ENCODE measurements at regions of chr17 and their contacts with region 1.

Region 1: GRCh38 chr17:79991140-79991923 is 44.3 kb downstream of the TBC1D16 start:
- DNase-seq: no peak
- H3K4me3 ChIP-seq: peak overlapping the region; percentile 42
- CTCF ChIP-seq: peak; percentile 86

Region 2: DNA sequence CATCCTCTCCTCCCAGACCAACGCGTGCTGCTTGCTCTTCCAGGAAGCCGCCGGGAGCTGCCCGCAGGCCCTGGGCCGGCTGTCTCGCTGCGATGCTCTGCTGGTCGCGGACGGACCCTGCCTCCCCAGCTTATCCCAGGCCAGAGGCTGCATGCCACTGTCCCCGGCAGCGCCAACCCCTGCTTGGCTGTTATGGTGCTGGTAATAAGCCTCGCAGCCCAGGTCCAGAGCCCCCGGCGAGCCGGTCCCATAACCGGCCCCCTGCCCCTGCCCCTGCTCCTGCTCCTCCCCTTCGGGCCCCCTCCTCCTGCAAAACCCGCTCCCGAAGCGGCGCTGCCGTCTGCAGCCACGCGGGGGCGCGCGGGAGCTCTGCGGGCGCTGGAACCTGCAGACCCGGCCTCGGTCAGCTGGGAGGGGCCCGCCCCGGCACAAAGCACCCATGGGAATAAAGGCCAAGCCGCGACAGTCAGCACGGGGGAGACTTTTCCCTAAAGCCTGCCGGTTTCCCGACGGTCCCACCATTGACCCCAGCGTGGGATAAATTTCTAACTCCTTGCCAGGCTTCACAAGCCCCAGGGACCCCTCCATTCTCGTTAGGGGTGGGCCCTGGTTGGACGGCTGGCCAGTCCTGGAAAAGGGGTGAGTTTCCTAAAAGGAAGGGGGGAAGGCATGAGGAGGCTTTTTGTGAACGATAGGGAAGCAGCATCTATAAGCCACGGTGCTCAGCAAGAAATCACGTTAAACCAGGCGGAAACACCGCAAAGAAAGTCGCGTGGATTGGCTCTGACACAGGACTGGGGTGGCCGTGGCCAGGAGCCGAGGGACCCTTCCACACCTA is 249.4 kb before region 1 on chr17:
- CTCF ChIA-PET with region 1: interaction called, 26 read pairs
- POLR2A ChIA-PET with region 1: interaction called, 3 read pairs
- DNase-seq: no peak
- H3K4me3 ChIP-seq: no peak overlapping the region
- CTCF ChIP-seq: peak; percentile 95

Region 3: GRCh38 chr17:79769596-79770520 is 221.5 kb before region 1 on chr17:
- CTCF ChIA-PET with region 1: no interaction called
- POLR2A ChIA-PET with region 1: no interaction called
- DNase-seq: no peak
- H3K4me3 ChIP-seq: no peak overlapping the region
- CTCF ChIP-seq: no peak

Region 4: DNA sequence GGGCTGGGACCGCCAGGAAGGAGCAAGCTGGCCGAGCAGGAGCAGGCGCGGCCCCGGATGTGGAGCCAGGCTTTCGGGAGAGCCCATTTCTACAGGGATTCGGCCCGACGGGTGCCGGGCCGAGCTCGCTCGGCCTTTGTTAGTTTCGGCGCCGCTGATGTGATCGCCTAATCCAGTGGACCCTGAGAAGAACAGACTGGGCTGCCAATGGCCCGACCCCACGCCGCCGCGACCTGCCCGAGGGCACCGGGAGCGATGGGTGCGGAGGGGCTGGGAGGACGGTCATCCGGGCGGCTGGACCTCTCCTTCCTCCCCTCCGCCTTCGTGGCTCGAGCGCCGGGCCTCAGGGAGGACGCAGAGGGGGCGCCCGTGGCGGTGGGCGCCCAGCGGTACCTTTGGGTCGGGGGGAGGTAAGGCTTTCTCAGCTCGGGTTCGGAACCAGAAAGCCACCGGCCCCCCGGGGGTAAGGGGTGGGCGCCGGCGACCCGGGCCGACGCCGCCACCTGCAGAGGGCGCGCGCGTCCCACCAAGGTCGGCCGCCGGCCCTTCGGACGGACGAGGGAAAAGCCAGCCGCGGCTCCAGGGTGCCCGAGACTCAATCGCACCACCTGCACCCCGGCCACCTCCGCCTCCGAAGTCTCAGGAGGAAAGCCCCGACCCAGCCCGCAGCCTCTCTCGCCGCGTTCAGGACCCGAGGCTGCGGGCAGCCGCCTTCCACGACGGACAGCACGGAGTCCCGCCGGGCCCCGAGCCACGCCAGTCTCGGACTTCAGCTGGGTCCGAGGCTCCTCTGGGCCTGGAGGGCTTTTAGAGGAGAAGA is 201.6 kb before region 1 on chr17:
- CTCF ChIA-PET with region 1: interaction called, 15 read pairs
- POLR2A ChIA-PET with region 1: no interaction called
- DNase-seq: no peak
- H3K4me3 ChIP-seq: no peak overlapping the region
- CTCF ChIP-seq: peak; percentile 64

Region 5: DNA sequence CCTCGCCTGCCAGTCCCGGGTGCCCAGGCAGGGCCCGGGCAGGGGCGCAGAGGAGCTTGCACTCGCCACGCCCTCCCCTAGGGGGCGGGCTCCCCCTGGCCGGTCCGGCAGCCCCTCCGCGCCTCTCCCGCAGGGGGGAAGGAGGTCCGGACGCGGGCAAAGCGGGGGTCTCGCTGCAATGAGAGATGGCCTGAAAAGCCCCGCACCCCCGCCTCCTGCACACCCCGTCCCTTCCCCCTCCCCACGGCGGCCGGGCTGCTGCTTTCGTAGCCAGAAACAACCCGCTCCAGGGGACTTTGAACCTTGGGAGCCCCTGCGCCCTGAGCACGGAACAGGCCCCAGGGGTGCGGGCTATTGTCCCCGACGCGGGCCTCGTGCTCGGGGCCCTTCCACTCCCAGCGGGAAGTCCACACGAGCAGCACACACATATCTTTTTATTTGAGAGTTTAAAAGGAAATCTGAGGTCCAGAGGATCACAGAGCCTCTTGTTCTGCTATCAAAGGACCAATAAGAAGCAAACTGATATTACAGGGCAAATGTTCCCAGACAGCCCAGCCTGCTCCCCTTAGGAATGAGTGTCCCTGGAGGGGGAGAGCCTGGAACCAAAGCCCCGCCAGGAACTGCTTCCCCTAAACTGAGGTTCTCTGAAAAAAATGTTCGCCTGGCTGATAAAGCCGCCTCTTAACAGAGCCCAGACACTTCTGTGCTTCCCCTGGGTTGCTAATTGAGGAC is 146.3 kb before region 1 on chr17:
- CTCF ChIA-PET with region 1: interaction called, 17 read pairs
- POLR2A ChIA-PET with region 1: interaction called, 10 read pairs
- DNase-seq: no peak
- H3K4me3 ChIP-seq: no peak overlapping the region
- CTCF ChIP-seq: peak; percentile 83

Region 6: GRCh38 chr17:80035943-80036714 is 44.8 kb after region 1 on chr17 and contains the start of gene CCDC40:
- CTCF ChIA-PET with region 1: no interaction called
- POLR2A ChIA-PET with region 1: no interaction called
- DNase-seq: no peak
- H3K4me3 ChIP-seq: peak within 1 kb of the TSS; percentile 88
- CTCF ChIP-seq: peak; percentile 2